Mammary epithelial cell (primary cell): ENCODE measurements at regions of chr11 and their contacts with region 1.

Region 1: DNA sequence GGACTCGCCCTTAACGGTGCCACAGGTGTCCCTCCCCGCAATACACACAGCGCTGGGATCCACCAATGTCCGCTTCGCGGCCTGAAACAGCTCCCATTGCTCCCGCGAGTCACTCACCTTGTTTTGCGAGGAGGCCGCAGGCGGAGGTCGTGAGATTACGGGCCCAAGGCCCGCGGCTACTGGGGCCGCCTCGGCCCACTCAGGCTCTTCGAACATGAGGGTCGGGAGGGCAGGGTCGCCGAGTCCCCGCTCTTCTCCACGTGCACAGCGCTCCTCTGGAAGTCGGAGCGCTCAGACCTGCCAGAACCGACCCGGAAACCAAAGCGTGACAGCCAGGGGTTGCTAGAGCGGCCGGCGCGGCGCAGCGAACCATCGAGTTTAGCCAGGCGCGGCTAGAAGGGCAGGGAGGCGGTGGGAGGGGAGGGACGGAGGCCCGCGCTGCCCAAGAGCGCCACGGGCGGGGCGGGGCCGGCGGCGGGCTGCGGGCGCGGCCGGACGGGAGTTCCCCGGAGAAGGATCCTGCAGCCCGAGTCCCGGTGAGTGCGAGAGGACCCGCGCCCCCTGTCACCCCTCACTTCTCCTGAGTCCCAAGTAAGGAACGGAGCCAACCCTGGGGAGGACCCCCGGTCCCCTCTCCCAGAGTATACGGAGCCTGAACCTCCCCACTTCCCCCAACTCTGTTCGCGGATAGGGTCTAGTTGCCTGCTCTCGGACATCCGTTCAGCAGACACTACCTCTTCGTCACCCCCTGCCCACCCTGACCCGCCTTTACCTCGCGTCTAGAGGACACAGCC is at the starts of genes ILK and RRP8:
- DNase-seq: peak; percentile 90
- H3K4me3 ChIP-seq: peak within 1 kb of the TSS; percentile 64 to 88 (median 76)
- H3K27ac ChIP-seq: peak within 1 kb of the TSS; percentile 69
- H3K4me1 ChIP-seq: peaks cover 33% of the 10 kb centered on the region
- H3K27me3 ChIP-seq: no peaks in the 10 kb centered on the region
- CTCF ChIP-seq: peak in 1 of 2 donors; percentile 35
- total RNA-seq, gene ILK: 87.9 to 136 TPM
- total RNA-seq, gene RRP8: 9.7 to 20.6 TPM

Region 2: GRCh38 chr11:5643585-5643984 is 959.9 kb before region 1 on chr11:
- CTCF ChIA-PET with region 1: no interaction called
- dilution Hi-C with region 1: no loop called
- in situ Hi-C with region 1: no loop called
- intact Hi-C with region 1: no loop called
- DNase-seq: no peak
- H3K4me3 ChIP-seq: no peak overlapping the region
- H3K27ac ChIP-seq: no peak overlapping the region
- H3K4me1 ChIP-seq: no peaks in the 10 kb centered on the region
- H3K27me3 ChIP-seq: no peaks in the 10 kb centered on the region
- CTCF ChIP-seq: no peak

Region 3: DNA sequence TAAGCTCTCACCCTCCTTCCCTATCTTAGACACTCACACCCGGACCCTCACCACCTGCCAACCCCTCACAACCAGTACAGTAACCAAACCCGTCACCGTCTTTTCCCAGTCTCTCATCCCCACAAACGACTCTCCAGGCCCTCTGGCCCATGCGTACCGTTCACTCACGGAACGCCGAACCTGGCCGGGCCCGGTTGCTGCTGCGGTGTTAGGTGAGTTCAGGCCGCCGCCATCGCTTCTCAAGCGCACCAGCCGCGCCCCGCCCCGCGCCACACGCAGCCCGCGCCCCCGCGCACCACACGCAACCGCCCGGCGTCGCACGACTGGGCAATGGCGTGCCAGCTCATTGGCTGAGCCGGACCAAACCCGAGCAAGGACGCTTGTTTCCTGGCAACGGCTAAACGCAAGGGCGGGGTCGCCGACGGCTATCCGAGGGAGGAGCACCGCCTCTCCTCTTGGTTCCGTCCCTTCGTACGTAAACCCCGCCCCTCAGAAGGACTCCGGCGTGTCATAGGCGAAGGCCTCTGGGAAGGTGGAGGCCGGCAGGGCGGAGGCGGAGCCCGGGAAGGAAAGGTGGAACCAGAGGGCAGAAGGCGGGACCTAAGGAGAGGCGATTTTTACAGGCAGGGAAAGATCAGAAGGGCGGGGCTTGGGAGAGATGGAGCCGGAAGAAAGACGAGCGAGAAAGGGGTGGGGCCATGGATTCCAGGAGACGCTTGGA is 368.9 kb before region 1 on chr11 and contains the start of gene FHIP1B:
- CTCF ChIA-PET with region 1: no interaction called
- dilution Hi-C with region 1: no loop called
- in situ Hi-C with region 1: no loop called
- intact Hi-C with region 1: loop called (anchors 2 kb)
- DNase-seq: peak; percentile 100
- H3K4me3 ChIP-seq: peak within 1 kb of the TSS; percentile 86 to 98 (median 89)
- H3K27ac ChIP-seq: peak within 1 kb of the TSS; percentile 94
- H3K4me1 ChIP-seq: peaks cover 3% of the 10 kb centered on the region
- H3K27me3 ChIP-seq: no peaks in the 10 kb centered on the region
- CTCF ChIP-seq: no peak
- total RNA-seq, gene FHIP1B: 24.4 to 29.7 TPM

Region 4: GRCh38 chr11:6531267-6531752 is 72.2 kb before region 1 on chr11:
- CTCF ChIA-PET with region 1: interaction called, 9 read pairs
- dilution Hi-C with region 1: no loop called
- in situ Hi-C with region 1: no loop called
- intact Hi-C with region 1: loop called (anchors 1 kb)
- DNase-seq: peak; percentile 21
- H3K4me3 ChIP-seq: no peak overlapping the region
- H3K27ac ChIP-seq: no peak overlapping the region
- H3K4me1 ChIP-seq: no peaks in the 10 kb centered on the region
- H3K27me3 ChIP-seq: no peaks in the 10 kb centered on the region
- CTCF ChIP-seq: peak; percentile 76 to 80

Region 5: GRCh38 chr11:6625156-6625835 is 21.8 kb after region 1 on chr11:
- CTCF ChIA-PET with region 1: no interaction called
- dilution Hi-C with region 1: no loop called
- in situ Hi-C with region 1: no loop called
- intact Hi-C with region 1: no loop called
- DNase-seq: no peak
- H3K4me3 ChIP-seq: no peak overlapping the region
- H3K27ac ChIP-seq: no peak overlapping the region
- H3K4me1 ChIP-seq: peaks cover 3% of the 10 kb centered on the region
- H3K27me3 ChIP-seq: peaks cover under 1% of the 10 kb centered on the region
- CTCF ChIP-seq: no peak

Region 6: DNA sequence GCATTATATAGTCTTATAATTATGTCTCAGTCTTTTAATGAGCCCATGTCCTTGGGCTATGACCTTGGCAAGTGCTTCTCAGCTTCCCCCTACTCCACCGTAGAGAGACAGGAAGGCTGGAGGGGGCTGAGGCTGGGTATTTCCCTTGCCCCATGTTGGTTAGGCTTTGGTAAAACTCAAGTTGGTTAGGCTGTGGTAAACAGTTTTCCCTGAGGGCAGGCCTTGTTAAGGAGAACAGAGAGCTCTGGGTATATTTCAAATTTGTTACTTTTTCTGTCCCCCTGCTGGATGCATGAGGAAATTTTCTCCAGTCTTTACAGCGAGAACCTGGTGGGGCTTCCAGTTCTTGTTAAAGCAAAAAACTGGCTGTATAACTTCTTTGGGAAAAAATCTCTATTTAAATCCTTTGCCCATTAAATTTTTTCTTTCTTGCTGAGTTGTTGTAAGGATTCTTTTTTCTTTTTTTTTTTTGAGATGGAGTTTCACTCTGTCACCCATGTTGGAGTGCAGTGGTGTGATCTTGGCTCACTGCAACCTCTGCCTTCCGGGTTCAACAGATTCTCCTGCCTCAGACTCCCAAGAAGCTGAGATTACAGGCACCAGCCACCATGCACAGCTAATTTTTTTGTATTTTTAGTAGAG is 64.4 kb after region 1 on chr11:
- CTCF ChIA-PET with region 1: interaction called, 10 read pairs
- dilution Hi-C with region 1: no loop called
- in situ Hi-C with region 1: no loop called
- intact Hi-C with region 1: loop called (anchors 5 kb)
- DNase-seq: peak; percentile 12
- H3K4me3 ChIP-seq: no peak overlapping the region
- H3K27ac ChIP-seq: no peak overlapping the region
- H3K4me1 ChIP-seq: no peaks in the 10 kb centered on the region
- H3K27me3 ChIP-seq: no peaks in the 10 kb centered on the region
- CTCF ChIP-seq: peak; percentile 59 to 61

Region 7: GRCh38 chr11:6705905-6706535 is 102.5 kb after region 1 on chr11:
- CTCF ChIA-PET with region 1: no interaction called
- dilution Hi-C with region 1: no loop called
- in situ Hi-C with region 1: no loop called
- intact Hi-C with region 1: loop called (anchors 5 kb)
- DNase-seq: peak; percentile 21
- H3K4me3 ChIP-seq: no peak overlapping the region
- H3K27ac ChIP-seq: no peak overlapping the region
- H3K4me1 ChIP-seq: no peaks in the 10 kb centered on the region
- H3K27me3 ChIP-seq: no peaks in the 10 kb centered on the region
- CTCF ChIP-seq: peak; percentile 80 to 91

Region 8: DNA sequence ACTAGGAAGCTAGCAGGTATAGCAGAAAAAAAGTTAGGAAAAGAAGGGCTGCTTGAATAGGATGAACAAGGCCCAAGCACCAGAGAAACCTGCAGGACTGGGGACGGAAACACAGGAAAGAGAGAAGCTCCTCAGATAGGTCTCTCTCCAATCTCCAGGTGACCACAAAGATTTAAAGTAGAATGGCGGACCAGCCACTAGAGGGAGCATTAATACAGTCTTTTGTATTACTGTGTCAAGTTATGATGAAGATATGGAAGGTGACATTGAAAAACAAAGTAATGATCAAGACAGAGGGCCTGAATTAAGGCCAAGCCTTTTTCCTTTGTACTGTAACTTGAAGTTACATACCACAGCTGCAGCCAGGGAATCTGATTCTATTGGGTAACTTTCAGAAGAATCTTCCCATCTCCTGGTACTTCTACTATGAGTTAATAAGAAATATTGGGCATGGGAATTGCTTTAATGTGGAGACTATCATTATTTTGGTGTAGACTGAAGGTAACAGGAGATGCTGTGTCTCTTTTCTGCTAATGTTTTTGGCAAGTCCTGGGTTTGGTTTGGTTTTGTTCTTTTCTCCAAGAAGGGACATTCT is 134.5 kb after region 1 on chr11:
- CTCF ChIA-PET with region 1: no interaction called
- dilution Hi-C with region 1: no loop called
- in situ Hi-C with region 1: no loop called
- intact Hi-C with region 1: no loop called
- DNase-seq: peak; percentile 53
- H3K4me3 ChIP-seq: no peak overlapping the region
- H3K27ac ChIP-seq: no peak overlapping the region
- H3K4me1 ChIP-seq: no peaks in the 10 kb centered on the region
- H3K27me3 ChIP-seq: no peaks in the 10 kb centered on the region
- CTCF ChIP-seq: peak; percentile 70 to 74